ENCODE measurements at regions of chr4 and their contacts with region 1.

Region 1: GRCh38 chr4:64539234-64539849 is 130.1 kb upstream of the TECRL start:
- DNase-seq: peak in 4 of 10 donors; percentile 16 to 50 (median 31)
- H3K4me3 ChIP-seq: no peak overlapping the region
- H3K27ac ChIP-seq: no peak overlapping the region
- H3K27me3 ChIP-seq: no peaks in the 10 kb centered on the region
- CTCF ChIP-seq: peak; percentile 74 to 98 (median 86)

Region 2: DNA sequence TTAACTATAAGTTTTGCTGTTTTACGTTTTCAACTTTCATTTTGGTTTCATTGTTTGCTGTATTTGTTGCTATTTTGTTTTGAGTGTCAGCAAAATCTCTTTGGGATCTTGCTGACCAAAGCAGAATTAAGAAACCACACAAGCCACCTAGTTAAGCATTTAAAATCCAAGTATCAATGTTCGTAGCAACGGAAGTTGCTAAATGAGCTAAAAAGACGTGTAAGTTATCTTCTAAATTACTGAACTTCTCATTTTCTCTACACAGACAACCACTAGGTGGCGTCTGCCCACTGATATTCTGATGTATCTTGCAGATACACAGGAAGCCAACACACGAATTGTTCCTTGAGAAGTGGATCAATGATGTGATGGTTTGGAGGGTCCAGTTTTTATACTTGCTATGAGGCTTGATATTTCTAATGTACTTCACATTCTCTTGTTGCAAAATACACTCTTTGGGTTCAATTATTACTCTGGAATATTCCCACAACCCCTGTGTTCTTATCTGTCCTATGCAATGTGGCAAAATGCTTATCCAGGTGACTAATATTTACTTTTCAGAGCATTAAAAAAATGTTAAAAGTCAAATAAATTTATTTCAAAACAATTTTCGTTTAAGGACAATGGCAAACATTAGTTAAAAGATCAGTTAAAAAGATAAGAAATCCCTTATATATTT is 380.6 kb before region 1 on chr4:
- intact Hi-C with region 1: loop called (anchors 2 to 5 kb)
- DNase-seq: peak in 5 of 10 donors; percentile 7 to 73 (median 52)
- H3K4me3 ChIP-seq: peak overlapping the region in 19 of 59 donors; percentile 7 to 54 (median 26)
- H3K27ac ChIP-seq: no peak overlapping the region
- H3K27me3 ChIP-seq: no peaks in the 10 kb centered on the region
- CTCF ChIP-seq: peak; percentile 73 to 97 (median 84)

Region 3: GRCh38 chr4:64409300-64409699 is 130.0 kb before region 1 on chr4 and contains the start of gene TECRL:
- intact Hi-C with region 1: no loop called
- DNase-seq: no peak
- H3K4me3 ChIP-seq: no peak within 1 kb of the TSS
- H3K27ac ChIP-seq: no peak within 1 kb of the TSS
- H3K27me3 ChIP-seq: no peaks in the 10 kb centered on the region
- CTCF ChIP-seq: no peak
- total RNA-seq, gene TECRL: 0.16 TPM in 1 of 120 experiments, not detected in the others